Colonic mucosa (tissue), 4 donors: ENCODE measurements at regions of chr13 and their contacts with region 1.

Region 1: GRCh38 chr13:19863323-19864023 is at the start of gene ZMYM5:
- DNase-seq: peak; percentile 98
- H3K4me3 ChIP-seq: peak within 1 kb of the TSS; percentile 53
- H3K27ac ChIP-seq: peak within 1 kb of the TSS; percentile 100
- H3K4me1 ChIP-seq: no peaks in the 10 kb centered on the region
- H3K27me3 ChIP-seq: no peaks in the 10 kb centered on the region
- CTCF ChIP-seq: no peak
- total RNA-seq, gene ZMYM5: 6.4 to 13.8 TPM

Region 2: GRCh38 chr13:19618925-19619324 is 244.5 kb before region 1 on chr13:
- intact Hi-C with region 1: no loop called
- DNase-seq: peak; percentile 30
- H3K4me3 ChIP-seq: no peak overlapping the region
- H3K27ac ChIP-seq: no peak overlapping the region
- H3K4me1 ChIP-seq: no peaks in the 10 kb centered on the region
- H3K27me3 ChIP-seq: no peaks in the 10 kb centered on the region
- CTCF ChIP-seq: peak; percentile 44

Region 3: DNA sequence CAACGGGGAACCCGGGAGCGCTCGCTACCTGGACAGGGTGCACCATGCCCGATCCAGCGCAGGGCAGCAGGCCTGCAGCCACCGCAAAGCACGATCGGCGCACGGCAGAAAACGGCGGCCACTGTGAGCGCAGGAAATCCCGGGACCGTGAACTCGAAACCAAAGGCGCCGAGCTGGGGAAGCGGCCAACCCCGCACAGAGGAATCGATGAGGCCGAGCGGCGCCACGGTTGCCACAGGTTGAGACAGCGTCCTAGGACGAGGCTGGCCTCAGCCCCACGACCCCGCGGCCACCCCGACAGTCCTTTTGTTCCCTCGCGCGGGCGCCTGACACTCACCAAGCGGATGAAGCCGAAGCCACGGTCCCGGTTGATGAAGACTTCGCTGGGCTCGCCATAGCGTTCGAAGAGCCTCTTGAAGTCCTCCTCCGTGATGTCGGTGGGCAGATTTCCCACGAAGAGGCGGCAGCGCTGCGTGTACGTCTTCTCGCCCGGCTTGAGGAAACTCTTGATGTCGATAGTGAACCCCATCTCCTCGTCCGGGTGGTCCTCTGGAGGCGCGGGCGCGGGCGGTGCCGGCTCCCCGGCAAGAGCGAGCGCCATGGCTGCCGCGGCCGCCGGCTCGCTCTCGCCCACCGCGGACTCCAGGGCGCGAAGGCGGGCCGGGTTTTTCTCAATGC is 81.3 kb before region 1 on chr13:
- intact Hi-C with region 1: loop called (anchors 10 kb)
- DNase-seq: peak; percentile 46
- H3K4me3 ChIP-seq: peak overlapping the region; percentile 97
- H3K27ac ChIP-seq: peak overlapping the region; percentile 97
- H3K4me1 ChIP-seq: no peaks in the 10 kb centered on the region
- H3K27me3 ChIP-seq: no peaks in the 10 kb centered on the region
- CTCF ChIP-seq: no peak

Region 4: DNA sequence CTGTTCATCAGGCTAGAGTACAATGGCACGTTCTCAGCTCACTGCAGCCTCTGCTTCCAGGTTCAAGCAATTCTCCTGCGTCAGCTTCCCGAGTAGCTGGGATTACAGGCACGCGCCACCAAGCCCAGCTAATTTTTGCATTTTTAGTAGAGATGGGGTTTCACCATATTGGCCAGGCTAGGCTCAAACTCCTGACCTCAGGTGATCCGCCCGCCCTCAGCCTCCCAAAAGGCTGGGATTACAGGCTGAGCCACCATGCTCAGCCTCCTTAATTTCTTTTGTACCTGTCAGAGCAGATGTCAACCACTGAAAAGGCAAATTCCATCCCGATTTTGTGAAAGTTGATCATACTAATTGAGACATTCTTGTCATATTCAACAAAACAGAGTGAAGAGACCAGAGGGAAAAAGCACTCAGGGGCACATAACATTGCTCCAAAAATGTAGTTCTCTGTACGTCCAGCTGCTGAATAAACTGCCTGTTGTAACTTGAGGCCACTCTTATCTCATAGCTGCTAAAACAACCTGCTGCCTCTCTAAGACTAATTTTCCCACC is 53.4 kb before region 1 on chr13:
- intact Hi-C with region 1: no loop called
- DNase-seq: no peak
- H3K4me3 ChIP-seq: no peak overlapping the region
- H3K27ac ChIP-seq: no peak overlapping the region
- H3K4me1 ChIP-seq: no peaks in the 10 kb centered on the region
- H3K27me3 ChIP-seq: no peaks in the 10 kb centered on the region
- CTCF ChIP-seq: no peak

Region 5: DNA sequence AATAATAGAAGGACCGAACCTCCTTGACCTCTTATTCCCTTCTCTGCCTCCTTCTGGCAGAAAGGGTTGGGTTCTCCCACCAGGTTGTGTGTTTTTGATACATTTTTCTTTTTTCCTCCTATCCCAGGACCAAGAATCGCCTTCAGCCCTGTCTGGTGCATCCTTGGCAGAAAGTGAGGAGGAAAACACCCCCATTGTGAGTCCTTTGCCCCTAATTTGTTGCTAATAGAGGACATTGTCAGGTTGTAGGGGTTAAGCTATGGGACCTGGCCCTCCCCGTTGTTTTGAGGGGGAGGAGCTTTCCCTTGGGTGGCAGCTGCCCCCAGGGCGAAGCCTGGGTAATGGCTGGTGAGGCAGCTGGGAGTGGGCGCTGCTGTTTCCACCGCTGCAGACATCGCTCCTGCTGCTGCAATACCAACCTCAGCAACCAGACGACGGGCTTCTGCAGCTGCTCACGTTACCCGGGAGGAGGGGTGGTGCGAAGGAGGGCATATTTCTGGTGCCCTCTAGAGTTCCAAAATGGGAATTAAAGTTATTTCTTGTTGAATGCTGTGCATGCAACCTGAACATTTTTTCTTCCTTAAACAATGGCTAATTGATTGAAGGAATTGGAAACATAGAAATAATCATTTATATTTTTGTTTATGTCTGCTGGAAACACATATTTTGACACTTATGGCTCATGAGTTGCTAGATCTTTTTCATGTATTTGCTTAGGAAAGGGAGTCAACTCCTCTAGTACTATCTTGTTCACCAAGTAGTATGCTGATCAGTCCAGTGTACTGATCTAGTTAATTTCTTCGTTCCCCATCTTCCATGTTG is 96.6 kb after region 1 on chr13:
- intact Hi-C with region 1: loop called (anchors 5 kb)
- DNase-seq: peak; percentile 87
- H3K4me3 ChIP-seq: peak overlapping the region; percentile 76
- H3K27ac ChIP-seq: peak overlapping the region; percentile 98
- H3K4me1 ChIP-seq: peaks cover 7% of the 10 kb centered on the region
- H3K27me3 ChIP-seq: no peaks in the 10 kb centered on the region
- CTCF ChIP-seq: peak; percentile 90